ENCODE measurements at regions of chr10 and their contacts with region 1.

Region 1: GRCh38 chr10:60964257-60965235 is 20.6 kb upstream of the RHOBTB1 start:
- DNase-seq: peak; percentile 66
- H3K4me3 Mint-ChIP-seq: no peak overlapping the region
- H3K27ac Mint-ChIP-seq: no peak overlapping the region
- H3K4me1 Mint-ChIP-seq: peaks cover 17% of the 10 kb centered on the region
- H3K27me3 Mint-ChIP-seq: peaks cover 15% of the 10 kb centered on the region

Region 2: DNA sequence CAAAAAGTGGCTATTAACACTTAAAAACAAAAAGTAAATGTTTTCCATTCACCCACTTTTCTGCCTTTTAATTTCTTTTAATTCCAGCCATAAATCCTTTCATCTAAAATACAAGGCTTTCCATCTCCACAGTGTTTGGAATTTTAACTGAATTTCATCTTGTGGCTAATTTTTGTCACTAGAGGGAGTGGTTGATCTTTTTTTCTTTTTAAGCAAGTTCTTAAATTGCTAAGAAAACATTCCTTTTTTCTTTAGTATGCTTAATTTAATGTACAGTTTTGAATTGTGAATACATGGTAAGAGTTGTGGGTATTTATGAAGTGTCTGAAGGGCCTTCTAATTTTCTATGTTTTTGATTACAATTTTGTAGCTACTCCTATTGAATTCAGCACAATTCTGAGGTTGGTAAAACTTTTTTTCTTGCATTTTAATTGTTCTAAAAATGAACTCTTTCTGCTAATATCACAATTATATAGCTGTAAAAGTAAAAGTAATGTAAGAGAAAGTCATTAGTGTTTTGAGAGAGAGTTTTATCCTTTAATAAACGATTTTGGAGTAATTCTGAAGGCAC is 520.0 kb before region 1 on chr10:
- CTCF ChIA-PET with region 1: no interaction called
- intact Hi-C with region 1: loop called (anchors 1 kb)
- DNase-seq: no peak
- H3K4me3 Mint-ChIP-seq: no peak overlapping the region
- H3K27ac Mint-ChIP-seq: no peak overlapping the region
- H3K4me1 Mint-ChIP-seq: peaks cover 12% of the 10 kb centered on the region
- H3K27me3 Mint-ChIP-seq: no peaks in the 10 kb centered on the region

Region 3: GRCh38 chr10:60944159-60944909 is 20.2 kb before region 1 on chr10 and contains the start of gene RHOBTB1:
- CTCF ChIA-PET with region 1: no interaction called
- intact Hi-C with region 1: loop called (anchors 1 kb)
- DNase-seq: peak; percentile 33
- H3K4me3 Mint-ChIP-seq: peak within 1 kb of the TSS; percentile 62
- H3K27ac Mint-ChIP-seq: no peak within 1 kb of the TSS
- H3K4me1 Mint-ChIP-seq: peaks cover 8% of the 10 kb centered on the region
- H3K27me3 Mint-ChIP-seq: peaks cover 62% of the 10 kb centered on the region
- total RNA-seq, gene RHOBTB1: not detected

Measured in activated naive CD4-positive, alpha-beta T cell treated with anti-CD3 and anti-CD28 coated beads for 36 hours (primary cell).